Naive thymus-derived CD4-positive, alpha-beta T cell (primary cell): ENCODE measurements at regions of chr7 and their contacts with region 1.

Region 1: GRCh38 chr7:116211006-116211912 is 920 bp downstream of the TES start:
- DNase-seq: peak; percentile 54 to 89 (median 84)
- ATAC-seq: peak; percentile 87
- H3K4me3 ChIP-seq: peak overlapping the region; percentile 92
- H3K4me3 Mint-ChIP-seq: peak overlapping the region; percentile 84 to 99 (median 98)
- H3K27ac ChIP-seq: peak overlapping the region; percentile 93
- H3K27ac Mint-ChIP-seq: peak overlapping the region; percentile 94 to 99 (median 97)
- H3K4me1 ChIP-seq: peaks cover 28 to 42% of the 10 kb centered on the region in 2 donors
- H3K4me1 Mint-ChIP-seq: peaks cover 43 to 71% (median 59%) of the 10 kb centered on the region in 7 donors
- H3K27me3 ChIP-seq: no peaks in the 10 kb centered on the region
- H3K27me3 Mint-ChIP-seq: no peaks in the 10 kb centered on the region

Region 2: DNA sequence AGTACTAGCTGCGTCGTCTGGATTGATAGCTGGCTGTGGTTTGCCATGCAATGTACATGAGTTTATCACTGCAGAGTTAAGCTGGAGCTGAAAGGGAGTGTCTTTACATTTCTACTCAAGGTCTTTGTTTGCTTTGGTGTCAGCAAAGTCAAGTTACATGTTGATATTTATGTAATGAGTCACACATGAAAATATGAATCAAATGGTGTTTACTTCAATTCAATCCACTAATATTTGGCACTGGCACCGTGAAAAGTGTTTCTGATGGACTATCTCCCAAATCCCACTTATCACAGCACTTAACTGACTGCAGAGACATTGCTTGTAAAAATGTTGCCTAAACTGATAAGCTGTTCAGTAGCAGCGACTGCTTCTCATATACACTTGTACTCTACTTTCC is 576.6 kb before region 1 on chr7:
- CTCF ChIA-PET with region 1: no interaction called
- POLR2A ChIA-PET with region 1: no interaction called
- intact Hi-C with region 1: no loop called
- DNase-seq: no peak
- ATAC-seq: no peak
- H3K4me3 ChIP-seq: no peak overlapping the region
- H3K4me3 Mint-ChIP-seq: no peak overlapping the region
- H3K27ac ChIP-seq: no peak overlapping the region
- H3K27ac Mint-ChIP-seq: no peak overlapping the region
- H3K4me1 ChIP-seq: no peaks in the 10 kb centered on the region
- H3K4me1 Mint-ChIP-seq: no peaks in the 10 kb centered on the region
- H3K27me3 ChIP-seq: no peaks in the 10 kb centered on the region
- H3K27me3 Mint-ChIP-seq: no peaks in the 10 kb centered on the region

Region 3: DNA sequence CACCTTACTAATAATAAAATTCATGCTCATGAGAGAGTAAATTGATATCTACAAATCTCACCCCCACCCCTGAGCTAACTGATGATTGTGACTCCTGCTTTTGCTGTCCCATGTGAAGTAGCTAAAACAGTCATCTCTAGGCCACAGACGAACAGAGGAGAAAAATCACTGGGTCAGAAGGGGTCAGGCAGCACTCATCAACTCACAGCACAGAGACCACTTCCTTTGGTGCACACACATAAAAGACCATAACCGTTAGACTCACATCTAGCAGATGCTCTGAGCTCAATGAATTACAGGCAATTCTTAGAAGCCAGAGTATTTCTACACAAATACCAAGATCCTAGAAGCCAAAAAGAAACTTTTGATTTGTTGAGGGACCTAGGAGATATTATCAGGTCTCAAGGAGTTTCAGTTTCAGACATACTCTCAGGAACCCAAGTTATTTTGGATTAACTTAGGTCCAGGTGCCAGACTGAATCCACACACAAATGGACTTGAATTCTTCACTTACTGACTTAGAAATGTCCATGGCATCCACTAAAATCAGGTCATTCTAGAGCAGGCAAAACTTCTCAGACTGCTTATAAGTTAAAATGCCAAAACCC is 65.9 kb before region 1 on chr7:
- CTCF ChIA-PET with region 1: no interaction called
- POLR2A ChIA-PET with region 1: no interaction called
- intact Hi-C with region 1: loop called in 1 of 2 experiments (anchors 2 kb)
- DNase-seq: no peak
- ATAC-seq: no peak
- H3K4me3 ChIP-seq: no peak overlapping the region
- H3K4me3 Mint-ChIP-seq: peak overlapping the region in 1 of 10 donors; percentile 66
- H3K27ac ChIP-seq: no peak overlapping the region
- H3K27ac Mint-ChIP-seq: peak overlapping the region in 1 of 9 donors; percentile 85
- H3K4me1 ChIP-seq: no peaks in the 10 kb centered on the region
- H3K4me1 Mint-ChIP-seq: peaks cover 0 to 46% (median 9%) of the 10 kb centered on the region in 7 donors
- H3K27me3 ChIP-seq: no peaks in the 10 kb centered on the region
- H3K27me3 Mint-ChIP-seq: peaks cover 0 to 6% (median 4%) of the 10 kb centered on the region in 5 donors

Region 4: GRCh38 chr7:116195451-116195850 is 15.8 kb before region 1 on chr7:
- CTCF ChIA-PET with region 1: interaction called, 13 read pairs
- POLR2A ChIA-PET with region 1: interaction called, 42 read pairs
- intact Hi-C with region 1: no loop called
- DNase-seq: no peak
- ATAC-seq: no peak
- H3K4me3 ChIP-seq: no peak overlapping the region
- H3K4me3 Mint-ChIP-seq: no peak overlapping the region
- H3K27ac ChIP-seq: no peak overlapping the region
- H3K27ac Mint-ChIP-seq: no peak overlapping the region
- H3K4me1 ChIP-seq: no peaks in the 10 kb centered on the region
- H3K4me1 Mint-ChIP-seq: no peaks in the 10 kb centered on the region
- H3K27me3 ChIP-seq: no peaks in the 10 kb centered on the region
- H3K27me3 Mint-ChIP-seq: peaks cover 0 to 43% (median 0%) of the 10 kb centered on the region in 5 donors

Region 5: GRCh38 chr7:116224492-116225098 is 13.3 kb after region 1 on chr7:
- CTCF ChIA-PET with region 1: interaction called, 6 read pairs
- POLR2A ChIA-PET with region 1: interaction called, 43 read pairs
- intact Hi-C with region 1: loop called (anchors 1 kb)
- DNase-seq: peak in 2 of 9 donors; percentile 25 to 28
- ATAC-seq: peak; percentile 69
- H3K4me3 ChIP-seq: peak overlapping the region; percentile 5
- H3K4me3 Mint-ChIP-seq: peak overlapping the region; percentile 1 to 79 (median 68)
- H3K27ac ChIP-seq: peak overlapping the region; percentile 23
- H3K27ac Mint-ChIP-seq: peak overlapping the region; percentile 64 to 85 (median 71)
- H3K4me1 ChIP-seq: peaks cover 69 to 70% of the 10 kb centered on the region in 2 donors
- H3K4me1 Mint-ChIP-seq: peaks cover 66 to 96% (median 88%) of the 10 kb centered on the region in 7 donors
- H3K27me3 ChIP-seq: no peaks in the 10 kb centered on the region
- H3K27me3 Mint-ChIP-seq: no peaks in the 10 kb centered on the region

Region 6: GRCh38 chr7:116588641-116589594 is 377.7 kb after region 1 on chr7:
- CTCF ChIA-PET with region 1: interaction called, 10 read pairs
- POLR2A ChIA-PET with region 1: no interaction called
- intact Hi-C with region 1: no loop called
- DNase-seq: peak in 5 of 9 donors; percentile 22 to 40 (median 32)
- ATAC-seq: peak; percentile 69
- H3K4me3 ChIP-seq: no peak overlapping the region
- H3K4me3 Mint-ChIP-seq: no peak overlapping the region
- H3K27ac ChIP-seq: no peak overlapping the region
- H3K27ac Mint-ChIP-seq: no peak overlapping the region
- H3K4me1 ChIP-seq: no peaks in the 10 kb centered on the region
- H3K4me1 Mint-ChIP-seq: peaks cover 15 to 27% (median 19%) of the 10 kb centered on the region in 7 donors
- H3K27me3 ChIP-seq: no peaks in the 10 kb centered on the region
- H3K27me3 Mint-ChIP-seq: peaks cover 22 to 32% (median 26%) of the 10 kb centered on the region in 5 donors

Region 7: DNA sequence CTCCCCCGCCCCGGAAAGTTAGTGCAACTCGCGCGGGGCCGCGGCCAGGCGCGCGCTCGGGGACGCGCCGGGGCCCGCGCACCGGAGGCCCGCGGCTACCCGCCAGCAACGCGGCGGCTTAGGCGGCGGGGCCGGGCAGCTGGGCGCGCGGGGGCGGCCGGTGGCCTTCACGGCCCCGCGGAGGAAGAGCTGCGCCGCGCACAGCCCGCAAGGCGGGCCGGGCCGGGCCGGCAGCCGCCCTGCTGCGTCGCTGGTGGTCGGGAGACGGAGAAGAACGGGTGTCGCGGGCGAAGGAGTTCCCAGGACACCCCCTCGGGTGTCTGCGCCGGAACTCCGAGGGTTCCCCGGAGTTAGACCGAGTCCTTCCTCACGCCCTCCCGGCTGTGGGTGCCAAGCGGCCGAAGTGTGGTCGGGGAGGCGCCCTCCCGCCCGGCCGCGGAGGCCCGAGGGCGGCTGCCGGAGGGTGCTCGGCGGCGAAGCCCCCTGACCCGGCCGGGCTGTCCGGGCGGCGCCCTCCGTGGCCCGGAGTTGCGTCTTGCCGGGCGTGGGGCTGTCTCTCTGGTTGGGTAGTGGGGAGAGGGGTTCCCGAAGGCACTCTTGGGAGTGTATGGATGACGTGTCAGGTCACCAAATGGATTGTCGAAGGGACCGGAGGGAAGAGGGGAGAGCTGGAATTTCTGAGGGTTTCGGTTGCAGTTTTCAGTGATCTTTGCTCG is 742.6 kb after region 1 on chr7:
- CTCF ChIA-PET with region 1: no interaction called
- POLR2A ChIA-PET with region 1: no interaction called
- intact Hi-C with region 1: loop called (anchors 1 to 10 kb)
- DNase-seq: peak in 4 of 9 donors; percentile 7 to 64 (median 36)
- ATAC-seq: peak; percentile 87
- H3K4me3 ChIP-seq: peak overlapping the region; percentile 79
- H3K4me3 Mint-ChIP-seq: peak overlapping the region; percentile 86 to 96 (median 94)
- H3K27ac ChIP-seq: peak overlapping the region; percentile 64
- H3K27ac Mint-ChIP-seq: peak overlapping the region; percentile 66 to 95 (median 88)
- H3K4me1 ChIP-seq: peaks cover 7 to 8% of the 10 kb centered on the region in 2 donors
- H3K4me1 Mint-ChIP-seq: peaks cover 13 to 25% (median 22%) of the 10 kb centered on the region in 7 donors
- H3K27me3 ChIP-seq: no peaks in the 10 kb centered on the region
- H3K27me3 Mint-ChIP-seq: peaks cover 0 to 24% (median 0%) of the 10 kb centered on the region in 5 donors

Region 8: GRCh38 chr7:117032810-117033209 is 821.6 kb after region 1 on chr7:
- CTCF ChIA-PET with region 1: no interaction called
- POLR2A ChIA-PET with region 1: no interaction called
- intact Hi-C with region 1: no loop called
- DNase-seq: no peak
- ATAC-seq: no peak
- H3K4me3 ChIP-seq: no peak overlapping the region
- H3K4me3 Mint-ChIP-seq: no peak overlapping the region
- H3K27ac ChIP-seq: no peak overlapping the region
- H3K27ac Mint-ChIP-seq: no peak overlapping the region
- H3K4me1 ChIP-seq: no peaks in the 10 kb centered on the region
- H3K4me1 Mint-ChIP-seq: no peaks in the 10 kb centered on the region
- H3K27me3 ChIP-seq: no peaks in the 10 kb centered on the region
- H3K27me3 Mint-ChIP-seq: peaks cover 0 to 22% (median 0%) of the 10 kb centered on the region in 5 donors

Region 9: GRCh38 chr7:118183786-118184564 is 1972.7 kb after region 1 on chr7 and contains the start of gene LSM8:
- CTCF ChIA-PET with region 1: no interaction called
- POLR2A ChIA-PET with region 1: no interaction called
- intact Hi-C with region 1: loop called (anchors 1 kb)
- DNase-seq: peak; percentile 91 to 99 (median 97)
- ATAC-seq: peak; percentile 98
- H3K4me3 ChIP-seq: peak within 1 kb of the TSS; percentile 77
- H3K4me3 Mint-ChIP-seq: peak within 1 kb of the TSS; percentile 92 to 99 (median 98)
- H3K27ac ChIP-seq: peak within 1 kb of the TSS; percentile 94
- H3K27ac Mint-ChIP-seq: peak within 1 kb of the TSS; percentile 98 to 100 (median 99)
- H3K4me1 ChIP-seq: peaks cover 21 to 31% of the 10 kb centered on the region in 2 donors
- H3K4me1 Mint-ChIP-seq: peaks cover 20 to 61% (median 56%) of the 10 kb centered on the region in 7 donors
- H3K27me3 ChIP-seq: no peaks in the 10 kb centered on the region
- H3K27me3 Mint-ChIP-seq: peaks cover 0 to 3% (median 0%) of the 10 kb centered on the region in 5 donors
- total RNA-seq, gene LSM8: 33.5 to 65.8 (median 50.3) TPM